ENCODE measurements at regions of chr10 and their contacts with region 1.

Region 1: GRCh38 chr10:125160856-125161706 is 718 bp upstream of the CTBP2 start:
- DNase-seq: peak; percentile 81
- H3K4me3 ChIP-seq: peak overlapping the region; percentile 49 to 98 (median 77)
- H3K27ac ChIP-seq: peak overlapping the region; percentile 59
- H3K4me1 ChIP-seq: peaks cover 18% of the 10 kb centered on the region
- H3K27me3 ChIP-seq: no peaks in the 10 kb centered on the region
- CTCF ChIP-seq: peak; percentile 21 to 50
- POLR2A ChIP-seq: no peak

Region 2: DNA sequence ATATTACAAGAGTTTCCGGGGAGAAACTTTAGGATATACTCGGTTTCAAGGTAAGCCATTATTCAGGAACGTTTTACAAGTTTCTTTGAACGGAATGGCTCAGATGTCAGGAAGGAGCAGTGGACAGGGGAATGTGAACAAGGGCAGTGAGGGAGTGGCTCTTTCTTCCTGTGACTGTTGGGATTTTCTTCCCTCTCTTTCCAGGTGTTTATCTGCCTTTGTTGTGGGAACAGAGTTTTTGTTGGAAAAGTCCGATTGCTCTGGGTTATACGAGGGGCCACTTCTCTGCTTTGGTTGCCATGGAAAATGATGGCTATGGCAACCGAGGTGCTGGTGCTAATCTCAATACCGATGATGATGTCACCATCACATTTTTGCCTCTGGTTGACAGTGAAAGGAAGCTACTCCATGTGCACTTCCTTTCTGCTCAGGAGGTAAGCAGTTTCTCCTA is 177.8 kb before region 1 on chr10:
- CTCF ChIA-PET with region 1: no interaction called
- POLR2A ChIA-PET with region 1: no interaction called
- dilution Hi-C with region 1: no loop called
- intact Hi-C with region 1: no loop called
- DNase-seq: peak; percentile 55
- H3K4me3 ChIP-seq: no peak overlapping the region
- H3K27ac ChIP-seq: peak overlapping the region; percentile 10
- H3K4me1 ChIP-seq: peaks cover 4% of the 10 kb centered on the region
- H3K27me3 ChIP-seq: no peaks in the 10 kb centered on the region
- CTCF ChIP-seq: no peak
- POLR2A ChIP-seq: no peak

Region 3: DNA sequence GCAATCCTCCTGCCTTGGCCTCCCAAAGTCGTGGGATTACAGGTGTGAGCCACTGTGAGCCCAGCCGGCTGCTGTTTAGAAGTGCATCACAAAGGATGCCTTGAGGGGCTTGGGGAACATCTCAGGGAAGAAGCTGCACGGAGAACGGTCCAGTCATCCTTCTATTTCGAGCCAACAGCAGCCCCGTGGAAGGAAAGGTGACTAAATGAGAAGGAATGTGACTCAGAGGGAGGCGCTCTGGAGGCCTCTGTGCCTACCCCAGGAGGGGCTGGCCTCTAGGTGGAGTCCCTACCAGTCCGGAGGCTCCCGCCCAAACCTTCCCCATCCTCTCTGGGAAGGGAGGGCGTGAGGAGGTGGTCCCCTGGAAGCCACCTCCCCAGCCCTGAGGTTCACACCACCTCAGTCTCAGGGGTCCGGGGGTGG is 76.9 kb before region 1 on chr10:
- CTCF ChIA-PET with region 1: no interaction called
- POLR2A ChIA-PET with region 1: no interaction called
- dilution Hi-C with region 1: no loop called
- intact Hi-C with region 1: loop called (anchors 1 kb)
- DNase-seq: peak; percentile 93
- H3K4me3 ChIP-seq: no peak overlapping the region
- H3K27ac ChIP-seq: peak overlapping the region; percentile 91
- H3K4me1 ChIP-seq: peaks cover 51% of the 10 kb centered on the region
- H3K27me3 ChIP-seq: no peaks in the 10 kb centered on the region
- CTCF ChIP-seq: peak; percentile 28 to 52
- POLR2A ChIP-seq: no peak

Region 4: GRCh38 chr10:125171402-125172306 is 10.6 kb after region 1 on chr10:
- CTCF ChIA-PET with region 1: no interaction called
- POLR2A ChIA-PET with region 1: no interaction called
- dilution Hi-C with region 1: no loop called
- intact Hi-C with region 1: no loop called
- DNase-seq: no peak
- H3K4me3 ChIP-seq: no peak overlapping the region
- H3K27ac ChIP-seq: no peak overlapping the region
- H3K4me1 ChIP-seq: no peaks in the 10 kb centered on the region
- H3K27me3 ChIP-seq: peaks cover 7 to 19% of the 10 kb centered on the region in 2 experiments
- CTCF ChIP-seq: no peak
- POLR2A ChIP-seq: no peak

Region 5: DNA sequence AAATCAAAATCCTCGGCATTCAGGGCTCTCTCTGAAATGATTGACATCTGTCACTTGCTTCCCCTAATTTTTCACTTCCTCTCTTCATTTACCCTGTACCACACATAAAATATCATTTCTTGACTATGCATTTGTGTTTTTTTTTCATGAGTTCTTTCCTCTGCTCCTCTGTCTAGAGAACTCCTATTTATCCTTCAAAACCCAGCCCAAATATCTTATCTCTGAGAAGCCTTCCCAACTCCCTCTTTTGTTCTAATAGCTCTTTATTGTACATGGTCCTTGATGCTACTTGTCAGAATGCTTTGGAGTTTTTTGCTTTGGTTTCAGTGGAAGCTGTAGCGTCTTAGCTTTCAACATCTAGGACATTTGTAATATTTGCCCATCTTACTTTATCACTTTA is 189.4 kb after region 1 on chr10:
- CTCF ChIA-PET with region 1: no interaction called
- POLR2A ChIA-PET with region 1: no interaction called
- dilution Hi-C with region 1: no loop called
- intact Hi-C with region 1: no loop called
- DNase-seq: no peak
- H3K4me3 ChIP-seq: no peak overlapping the region
- H3K27ac ChIP-seq: no peak overlapping the region
- H3K4me1 ChIP-seq: no peaks in the 10 kb centered on the region
- H3K27me3 ChIP-seq: peaks cover 8 to 12% of the 10 kb centered on the region in 2 experiments
- CTCF ChIP-seq: no peak
- POLR2A ChIP-seq: no peak

Region 6: DNA sequence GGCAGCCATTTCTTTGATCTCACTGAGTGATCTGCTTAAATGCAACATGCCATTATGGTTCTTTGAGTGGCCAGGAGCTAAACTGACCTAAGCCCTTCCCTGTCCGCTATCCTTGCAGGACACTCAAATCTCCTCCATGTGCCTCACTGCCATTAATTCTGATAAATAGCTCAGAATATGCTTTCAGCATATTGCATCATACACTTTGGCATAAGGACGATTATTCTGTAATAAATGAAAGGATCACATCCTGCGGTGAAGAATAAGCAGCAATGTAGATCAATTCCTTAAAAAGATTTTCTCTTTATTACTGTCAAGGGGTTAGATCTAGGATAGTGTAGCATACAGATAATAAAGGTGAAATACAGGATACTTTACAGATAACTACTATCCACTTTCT is 231.1 kb after region 1 on chr10:
- CTCF ChIA-PET with region 1: no interaction called
- POLR2A ChIA-PET with region 1: no interaction called
- dilution Hi-C with region 1: no loop called
- intact Hi-C with region 1: no loop called
- DNase-seq: no peak
- H3K4me3 ChIP-seq: no peak overlapping the region
- H3K27ac ChIP-seq: no peak overlapping the region
- H3K4me1 ChIP-seq: no peaks in the 10 kb centered on the region
- H3K27me3 ChIP-seq: no peaks in the 10 kb centered on the region
- CTCF ChIP-seq: no peak
- POLR2A ChIP-seq: no peak

Region 7: DNA sequence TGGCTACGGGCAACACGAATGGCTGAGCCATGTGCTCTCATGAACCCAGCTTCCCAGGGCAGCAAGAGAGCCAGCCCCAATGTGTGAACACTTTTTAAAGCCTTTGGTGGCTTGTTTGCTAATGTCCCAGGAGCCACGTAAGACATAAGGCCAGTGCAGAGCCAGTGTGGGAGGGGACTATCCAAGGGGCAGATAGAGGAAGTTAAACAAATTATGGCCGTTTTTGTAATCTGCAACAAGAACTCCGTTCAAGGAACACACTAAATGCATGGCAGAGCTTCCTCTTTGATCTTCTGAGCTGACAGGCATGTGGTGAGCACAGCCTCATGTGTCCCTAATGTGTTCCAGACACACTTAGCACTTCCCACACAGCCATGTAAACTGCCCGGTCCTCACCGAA is 388.6 kb after region 1 on chr10:
- CTCF ChIA-PET with region 1: no interaction called
- POLR2A ChIA-PET with region 1: no interaction called
- dilution Hi-C with region 1: no loop called
- intact Hi-C with region 1: loop called (anchors 1 kb)
- DNase-seq: no peak
- H3K4me3 ChIP-seq: no peak overlapping the region
- H3K27ac ChIP-seq: peak overlapping the region; percentile 73
- H3K4me1 ChIP-seq: peaks cover 22% of the 10 kb centered on the region
- H3K27me3 ChIP-seq: no peaks in the 10 kb centered on the region
- CTCF ChIP-seq: no peak
- POLR2A ChIP-seq: no peak

Region 8: GRCh38 chr10:125629763-125630376 is 468.8 kb after region 1 on chr10:
- CTCF ChIA-PET with region 1: interaction called, 4 read pairs
- POLR2A ChIA-PET with region 1: no interaction called
- dilution Hi-C with region 1: no loop called
- intact Hi-C with region 1: loop called (anchors 1 kb)
- DNase-seq: peak; percentile 81
- H3K4me3 ChIP-seq: no peak overlapping the region
- H3K27ac ChIP-seq: no peak overlapping the region
- H3K4me1 ChIP-seq: peaks cover 20% of the 10 kb centered on the region
- H3K27me3 ChIP-seq: no peaks in the 10 kb centered on the region
- CTCF ChIP-seq: peak; percentile 51 to 67
- POLR2A ChIP-seq: no peak

Region 9: GRCh38 chr10:125719146-125720001 is 558.3 kb after region 1 on chr10 and contains the start of gene EDRF1:
- CTCF ChIA-PET with region 1: no interaction called
- POLR2A ChIA-PET with region 1: no interaction called
- dilution Hi-C with region 1: no loop called
- intact Hi-C with region 1: loop called (anchors 1 kb)
- DNase-seq: peak; percentile 100
- H3K4me3 ChIP-seq: peak within 1 kb of the TSS; percentile 65 to 98 (median 93)
- H3K27ac ChIP-seq: peak within 1 kb of the TSS; percentile 67
- H3K4me1 ChIP-seq: peaks cover 6% of the 10 kb centered on the region
- H3K27me3 ChIP-seq: no peaks in the 10 kb centered on the region
- CTCF ChIP-seq: no peak
- POLR2A ChIP-seq: peak; percentile 97
- total RNA-seq, gene EDRF1: 24.7 and 27.8 TPM in 2 replicates